ENCODE measurements at regions of chr6 and their contacts with region 1.

Region 1: DNA sequence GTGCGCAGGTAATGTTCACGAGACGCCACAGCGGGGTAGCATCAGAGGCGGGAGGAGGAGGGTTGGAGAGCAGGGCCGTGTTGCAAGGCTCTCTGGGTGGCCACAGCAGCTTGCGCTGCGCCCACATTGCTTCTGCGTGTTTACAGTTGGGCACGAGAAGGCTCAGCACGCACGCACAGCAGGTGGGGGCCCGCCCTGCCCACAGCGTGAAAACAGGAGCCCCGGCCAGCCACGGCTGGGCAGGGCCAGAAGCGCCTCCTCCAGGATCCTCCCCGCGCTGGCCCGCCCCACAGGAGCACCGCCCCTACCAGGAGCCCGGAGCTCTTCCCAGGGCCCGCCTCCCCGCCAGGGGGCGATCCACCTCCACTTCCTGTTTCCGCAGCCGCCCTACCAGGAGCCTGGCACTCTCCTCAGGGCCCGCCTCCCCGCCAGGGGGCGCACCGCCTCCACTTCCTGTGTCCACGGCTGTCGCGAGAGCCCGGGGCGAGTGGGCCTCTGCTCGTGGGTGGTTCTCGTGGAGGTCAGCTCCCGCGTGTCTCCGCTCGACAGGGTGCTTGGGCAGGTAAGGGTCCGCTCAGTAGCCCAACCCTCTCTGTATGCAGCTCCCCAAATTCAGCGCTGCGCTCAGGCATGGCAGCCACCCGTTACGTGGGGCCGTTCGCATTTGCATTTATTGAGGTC is at the start of gene FAM50B:
- DNase-seq: peak; percentile 85 to 92 (median 91)
- H3K4me3 ChIP-seq: peak within 1 kb of the TSS; percentile 28 to 84 (median 64)
- H3K27ac ChIP-seq: peak within 1 kb of the TSS in 1 of 2 experiments; percentile 34
- H3K4me1 ChIP-seq: peaks cover 0 to 11% (median 3%) of the 10 kb centered on the region in 4 experiments
- H3K27me3 ChIP-seq: no peaks in the 10 kb centered on the region

Region 2: DNA sequence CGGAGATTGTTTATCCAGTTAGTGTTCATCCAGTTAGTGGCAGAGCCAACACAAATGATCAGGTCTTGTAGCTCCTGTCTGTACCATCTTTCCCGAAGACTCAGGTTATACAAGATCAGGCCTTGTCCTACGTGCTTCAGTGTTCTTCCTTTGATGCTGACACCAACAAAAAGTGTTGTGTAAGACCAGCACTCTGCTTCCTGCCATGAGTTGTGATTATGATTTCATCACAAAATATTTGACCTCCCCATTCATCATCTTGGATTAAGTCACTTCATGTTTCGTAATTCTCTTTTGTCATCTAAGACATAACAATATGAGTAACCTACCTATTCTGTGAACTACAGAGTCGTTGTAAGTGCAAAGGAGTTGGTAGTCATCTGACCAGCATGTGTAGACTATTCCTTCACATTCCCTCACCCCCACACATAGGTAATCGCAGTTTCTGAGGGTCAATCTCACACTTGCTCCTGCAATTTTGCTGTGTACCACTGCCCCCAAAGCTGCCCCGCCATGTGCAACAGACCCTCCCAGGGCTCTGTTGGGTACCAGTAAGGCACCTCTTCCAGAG is 256.6 kb before region 1 on chr6:
- CTCF ChIA-PET with region 1: no interaction called
- POLR2A ChIA-PET with region 1: no interaction called
- DNase-seq: peak; percentile 13 to 38 (median 25)
- H3K4me3 ChIP-seq: no peak overlapping the region
- H3K27ac ChIP-seq: no peak overlapping the region
- H3K4me1 ChIP-seq: peaks cover 0 to 12% (median 6%) of the 10 kb centered on the region in 4 experiments
- H3K27me3 ChIP-seq: no peaks in the 10 kb centered on the region

Region 3: DNA sequence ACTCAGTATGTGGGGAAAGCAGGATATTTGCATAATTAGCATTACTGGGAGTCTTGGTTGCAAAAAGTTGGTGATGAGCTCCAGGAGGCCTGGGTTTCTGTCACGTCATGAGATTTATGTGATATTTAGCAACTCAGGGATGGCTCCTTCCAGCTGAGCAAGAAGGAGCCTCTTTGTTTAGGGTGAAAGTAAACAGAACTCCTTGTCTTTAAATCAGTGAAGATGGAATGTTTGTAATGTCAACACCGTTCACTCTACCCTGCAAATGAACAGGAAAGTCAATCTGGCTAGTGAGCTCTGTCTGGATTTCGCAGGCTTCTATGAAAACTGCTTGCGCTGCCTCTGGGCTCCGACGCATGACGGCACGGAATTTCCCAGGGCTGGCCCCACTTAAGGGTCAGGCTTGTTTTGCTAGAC is 184.4 kb before region 1 on chr6:
- CTCF ChIA-PET with region 1: no interaction called
- POLR2A ChIA-PET with region 1: no interaction called
- DNase-seq: no peak
- H3K4me3 ChIP-seq: no peak overlapping the region
- H3K27ac ChIP-seq: no peak overlapping the region
- H3K4me1 ChIP-seq: no peaks in the 10 kb centered on the region
- H3K27me3 ChIP-seq: no peaks in the 10 kb centered on the region

Region 4: GRCh38 chr6:3764516-3765335 is 84.3 kb before region 1 on chr6:
- CTCF ChIA-PET with region 1: no interaction called
- POLR2A ChIA-PET with region 1: no interaction called
- DNase-seq: peak in 2 of 3 donors; percentile 69
- H3K4me3 ChIP-seq: no peak overlapping the region
- H3K27ac ChIP-seq: no peak overlapping the region
- H3K4me1 ChIP-seq: peaks cover 0 to 9% (median 3%) of the 10 kb centered on the region in 4 experiments
- H3K27me3 ChIP-seq: no peaks in the 10 kb centered on the region

Region 5: DNA sequence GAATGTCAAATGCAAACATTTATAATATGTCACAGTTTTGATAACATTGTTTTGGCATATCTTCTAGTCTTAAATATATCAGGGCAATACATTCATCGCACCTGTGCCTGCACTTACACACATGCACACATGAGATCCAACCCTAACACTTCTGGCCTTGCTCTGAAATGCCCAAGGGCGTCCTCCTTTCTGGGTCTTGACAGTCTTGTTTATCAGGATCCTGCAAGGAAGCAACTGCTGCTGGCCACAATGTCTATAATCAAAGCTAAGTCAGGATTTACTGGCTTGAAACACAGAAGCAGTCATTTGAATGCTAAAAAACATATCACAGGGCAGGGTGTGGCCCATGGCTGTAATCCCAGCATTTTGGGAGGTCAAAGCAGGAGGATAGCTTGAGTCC is 32.8 kb before region 1 on chr6:
- CTCF ChIA-PET with region 1: interaction called, 17 read pairs
- POLR2A ChIA-PET with region 1: no interaction called
- DNase-seq: no peak
- H3K4me3 ChIP-seq: no peak overlapping the region
- H3K27ac ChIP-seq: no peak overlapping the region
- H3K4me1 ChIP-seq: peaks cover 5 to 38% (median 27%) of the 10 kb centered on the region in 4 experiments
- H3K27me3 ChIP-seq: no peaks in the 10 kb centered on the region

Region 6: GRCh38 chr6:3990692-3991501 is 141.8 kb after region 1 on chr6:
- CTCF ChIA-PET with region 1: interaction called, 16 read pairs
- POLR2A ChIA-PET with region 1: no interaction called
- DNase-seq: peak; percentile 84 to 88 (median 86)
- H3K4me3 ChIP-seq: peak overlapping the region in 5 of 7 experiments; percentile 6 to 73 (median 49)
- H3K27ac ChIP-seq: no peak overlapping the region
- H3K4me1 ChIP-seq: peaks cover 0 to 6% (median 1%) of the 10 kb centered on the region in 4 experiments
- H3K27me3 ChIP-seq: no peaks in the 10 kb centered on the region